ENCODE measurements at regions of chr17 and their contacts with region 1.

Region 1: DNA sequence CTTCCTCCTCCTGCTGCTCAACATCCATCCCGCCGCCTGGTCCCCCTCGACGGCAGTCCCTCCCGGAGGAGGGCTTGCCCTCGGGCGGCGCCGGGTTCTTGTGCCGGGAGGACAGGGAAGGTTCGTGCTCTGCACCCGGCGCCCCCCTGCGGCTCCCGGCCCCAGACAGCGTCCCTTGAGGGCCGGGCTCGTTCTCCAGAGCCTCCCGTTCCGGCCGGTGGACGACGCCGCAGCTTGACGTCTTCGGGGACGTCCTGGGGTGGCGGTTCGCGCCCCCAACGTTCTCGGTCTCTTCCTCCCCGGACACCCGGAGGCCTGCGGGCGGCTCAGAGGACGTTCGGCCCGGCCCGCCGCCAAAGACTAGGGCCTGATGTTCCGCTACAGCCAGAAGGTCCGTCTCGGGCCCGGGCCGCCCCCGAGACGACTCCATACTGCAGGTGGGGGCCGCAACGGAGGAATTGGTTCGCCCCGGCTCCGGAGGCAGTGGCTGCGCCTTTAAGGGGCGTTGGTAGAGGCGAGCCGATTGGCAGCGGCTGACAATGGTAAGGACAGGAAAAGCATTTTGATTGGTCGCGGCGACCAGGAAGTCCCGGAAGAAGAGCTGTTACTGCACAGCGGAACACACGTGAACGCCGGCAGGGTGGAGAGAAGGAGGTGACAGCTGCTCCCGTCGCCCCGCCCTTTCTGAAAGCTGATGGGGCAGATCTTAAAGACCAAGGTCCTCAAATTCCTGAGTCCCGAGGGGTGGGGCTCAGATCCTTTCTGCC is at the start of gene BORCS6:
- DNase-seq: peak; percentile 76 to 97 (median 94)
- ATAC-seq: peak; percentile 81
- H3K4me3 ChIP-seq: peak within 1 kb of the TSS; percentile 91
- H3K4me3 Mint-ChIP-seq: peak within 1 kb of the TSS in 2 of 10 donors; percentile 15 to 49
- H3K27ac ChIP-seq: peak within 1 kb of the TSS; percentile 87
- H3K27ac Mint-ChIP-seq: peak within 1 kb of the TSS in 7 of 9 donors; percentile 46 to 94 (median 88)
- H3K4me1 ChIP-seq: peaks cover 33 to 38% of the 10 kb centered on the region in 2 donors
- H3K4me1 Mint-ChIP-seq: peaks cover 8 to 13% (median 13%) of the 10 kb centered on the region in 7 donors
- H3K27me3 ChIP-seq: no peaks in the 10 kb centered on the region
- H3K27me3 Mint-ChIP-seq: no peaks in the 10 kb centered on the region
- total RNA-seq, gene BORCS6: 5.4 to 16.1 (median 13.4) TPM

Region 2: DNA sequence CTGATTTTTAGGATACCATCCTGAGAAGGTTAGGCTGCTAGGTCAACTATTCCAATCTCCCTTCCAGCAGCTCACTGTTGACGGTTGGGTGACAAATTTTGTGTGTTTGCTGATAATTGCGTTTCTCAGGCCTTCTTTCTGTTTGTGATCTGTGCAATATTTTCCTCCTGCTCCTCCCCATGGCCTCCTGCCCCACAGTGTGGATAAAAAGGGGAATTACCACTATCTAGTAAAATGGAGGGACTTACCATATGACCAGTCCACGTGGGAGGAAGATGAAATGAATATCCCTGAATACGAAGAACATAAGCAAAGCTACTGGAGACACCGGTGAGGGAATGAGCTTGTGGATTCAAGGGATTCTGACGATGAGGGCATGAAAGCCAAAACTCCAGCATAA is 292.1 kb before region 1 on chr17:
- CTCF ChIA-PET with region 1: no interaction called
- POLR2A ChIA-PET with region 1: no interaction called
- intact Hi-C with region 1: no loop called
- DNase-seq: peak in 4 of 9 donors; percentile 33 to 42 (median 36)
- ATAC-seq: peak; percentile 75
- H3K4me3 ChIP-seq: no peak overlapping the region
- H3K4me3 Mint-ChIP-seq: no peak overlapping the region
- H3K27ac ChIP-seq: no peak overlapping the region
- H3K27ac Mint-ChIP-seq: peak overlapping the region in 8 of 9 donors; percentile 0 to 92 (median 78)
- H3K4me1 ChIP-seq: no peaks in the 10 kb centered on the region
- H3K4me1 Mint-ChIP-seq: peaks cover 8 to 27% (median 15%) of the 10 kb centered on the region in 7 donors
- H3K27me3 ChIP-seq: no peaks in the 10 kb centered on the region
- H3K27me3 Mint-ChIP-seq: no peaks in the 10 kb centered on the region

Region 3: DNA sequence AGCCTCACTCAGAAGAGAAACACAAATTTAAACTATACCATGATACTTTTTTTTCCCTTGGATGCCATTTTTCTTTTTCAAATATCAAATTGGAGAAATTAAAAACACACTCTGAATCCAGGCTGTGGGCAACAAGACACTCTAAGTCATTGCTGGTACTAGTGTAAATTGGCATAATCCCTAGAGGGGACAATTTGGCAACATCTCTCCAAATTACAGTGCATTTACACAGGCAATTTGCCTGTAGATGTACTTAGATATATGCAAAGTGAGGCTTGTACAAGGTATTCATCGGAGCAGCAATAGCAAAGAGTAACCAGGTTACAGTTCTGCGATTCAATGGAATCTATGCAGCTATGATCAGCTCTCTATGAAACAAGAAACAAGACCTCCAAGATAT is 194.2 kb before region 1 on chr17:
- CTCF ChIA-PET with region 1: no interaction called
- POLR2A ChIA-PET with region 1: no interaction called
- intact Hi-C with region 1: no loop called
- DNase-seq: no peak
- ATAC-seq: no peak
- H3K4me3 ChIP-seq: no peak overlapping the region
- H3K4me3 Mint-ChIP-seq: no peak overlapping the region
- H3K27ac ChIP-seq: no peak overlapping the region
- H3K27ac Mint-ChIP-seq: no peak overlapping the region
- H3K4me1 ChIP-seq: peaks cover 3 to 4% of the 10 kb centered on the region in 2 donors
- H3K4me1 Mint-ChIP-seq: peaks cover 4 to 13% (median 5%) of the 10 kb centered on the region in 7 donors
- H3K27me3 ChIP-seq: no peaks in the 10 kb centered on the region
- H3K27me3 Mint-ChIP-seq: peaks cover under 1 to 44% (median 8%) of the 10 kb centered on the region in 5 donors

Region 4: DNA sequence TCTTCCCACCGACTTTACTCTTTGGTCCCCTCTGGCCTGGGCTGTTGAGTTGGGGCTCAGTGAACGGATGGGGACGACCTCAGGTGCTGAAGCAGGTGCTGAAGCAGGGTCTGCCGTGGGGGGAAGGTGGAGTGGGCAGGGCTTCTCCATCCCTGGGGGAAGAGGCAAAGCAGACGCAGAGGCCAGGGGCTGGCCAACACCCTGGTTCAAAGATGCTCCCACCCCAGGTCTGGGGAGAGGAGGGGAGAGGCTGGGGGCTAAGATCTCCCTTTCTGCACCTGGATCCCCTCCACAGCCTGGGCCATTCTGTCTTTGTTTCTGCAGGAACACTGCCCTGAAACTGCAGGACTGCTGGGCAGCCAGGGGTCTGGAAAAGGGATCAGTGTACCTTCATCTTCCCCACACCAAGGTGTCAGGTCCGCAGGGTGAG is 125.3 kb before region 1 on chr17:
- CTCF ChIA-PET with region 1: no interaction called
- POLR2A ChIA-PET with region 1: no interaction called
- intact Hi-C with region 1: no loop called
- DNase-seq: no peak
- ATAC-seq: no peak
- H3K4me3 ChIP-seq: no peak overlapping the region
- H3K4me3 Mint-ChIP-seq: no peak overlapping the region
- H3K27ac ChIP-seq: no peak overlapping the region
- H3K27ac Mint-ChIP-seq: no peak overlapping the region
- H3K4me1 ChIP-seq: no peaks in the 10 kb centered on the region
- H3K4me1 Mint-ChIP-seq: peaks cover 0 to 4% (median 0%) of the 10 kb centered on the region in 7 donors
- H3K27me3 ChIP-seq: peaks cover 3 to 10% of the 10 kb centered on the region in 2 donors
- H3K27me3 Mint-ChIP-seq: peaks cover 23 to 74% (median 37%) of the 10 kb centered on the region in 5 donors

Region 5: DNA sequence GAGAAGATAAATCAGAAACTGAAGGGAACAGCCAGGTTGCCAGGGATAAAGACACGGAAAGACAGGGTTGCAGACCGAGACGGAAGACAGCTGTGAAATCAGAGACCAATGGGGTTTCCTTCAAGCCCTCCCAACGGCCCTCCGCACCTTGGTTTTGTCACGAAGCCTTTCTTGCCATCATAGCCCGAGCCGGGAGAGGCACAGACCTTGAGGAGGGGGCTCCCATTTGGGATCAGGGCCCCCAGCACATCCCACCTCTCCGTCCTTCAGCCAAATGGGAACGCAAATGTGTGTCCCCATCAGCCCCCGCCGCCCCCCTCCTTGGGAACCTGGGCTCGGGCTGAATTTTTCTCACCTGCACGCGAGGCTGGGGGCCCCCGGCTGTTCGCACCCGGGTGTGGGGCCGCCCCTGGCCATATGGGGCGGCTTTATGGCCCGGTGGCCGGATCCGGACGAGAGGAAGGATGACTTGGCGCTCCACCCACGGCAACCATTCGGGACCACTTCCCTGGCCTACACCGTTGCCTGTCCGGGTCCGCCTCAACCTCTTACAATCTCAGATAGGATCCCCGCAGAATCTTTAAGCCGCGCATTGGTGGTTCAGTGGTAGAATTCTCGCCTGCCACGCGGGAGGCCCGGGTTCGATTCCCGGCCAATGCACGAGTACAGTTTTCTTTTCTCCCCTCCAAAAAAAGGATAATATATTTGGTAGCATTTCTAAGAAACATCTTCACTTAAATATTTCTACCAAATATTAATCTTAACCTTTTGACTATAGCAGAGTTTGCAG is 64.5 kb before region 1 on chr17:
- CTCF ChIA-PET with region 1: interaction called, 29 read pairs
- POLR2A ChIA-PET with region 1: interaction called, 55 read pairs
- intact Hi-C with region 1: loop called (anchors 1 kb)
- DNase-seq: peak; percentile 82 to 97 (median 87)
- ATAC-seq: peak; percentile 63
- H3K4me3 ChIP-seq: peak overlapping the region; percentile 96
- H3K4me3 Mint-ChIP-seq: peak overlapping the region; percentile 88 to 99 (median 92)
- H3K27ac ChIP-seq: peak overlapping the region; percentile 50
- H3K27ac Mint-ChIP-seq: peak overlapping the region; percentile 80 to 99 (median 94)
- H3K4me1 ChIP-seq: peaks cover 46 to 50% of the 10 kb centered on the region in 2 donors
- H3K4me1 Mint-ChIP-seq: peaks cover 42 to 57% (median 51%) of the 10 kb centered on the region in 7 donors
- H3K27me3 ChIP-seq: peaks cover 0 to 3% of the 10 kb centered on the region in 2 donors
- H3K27me3 Mint-ChIP-seq: peaks cover 0 to 65% (median 27%) of the 10 kb centered on the region in 5 donors

Region 6: DNA sequence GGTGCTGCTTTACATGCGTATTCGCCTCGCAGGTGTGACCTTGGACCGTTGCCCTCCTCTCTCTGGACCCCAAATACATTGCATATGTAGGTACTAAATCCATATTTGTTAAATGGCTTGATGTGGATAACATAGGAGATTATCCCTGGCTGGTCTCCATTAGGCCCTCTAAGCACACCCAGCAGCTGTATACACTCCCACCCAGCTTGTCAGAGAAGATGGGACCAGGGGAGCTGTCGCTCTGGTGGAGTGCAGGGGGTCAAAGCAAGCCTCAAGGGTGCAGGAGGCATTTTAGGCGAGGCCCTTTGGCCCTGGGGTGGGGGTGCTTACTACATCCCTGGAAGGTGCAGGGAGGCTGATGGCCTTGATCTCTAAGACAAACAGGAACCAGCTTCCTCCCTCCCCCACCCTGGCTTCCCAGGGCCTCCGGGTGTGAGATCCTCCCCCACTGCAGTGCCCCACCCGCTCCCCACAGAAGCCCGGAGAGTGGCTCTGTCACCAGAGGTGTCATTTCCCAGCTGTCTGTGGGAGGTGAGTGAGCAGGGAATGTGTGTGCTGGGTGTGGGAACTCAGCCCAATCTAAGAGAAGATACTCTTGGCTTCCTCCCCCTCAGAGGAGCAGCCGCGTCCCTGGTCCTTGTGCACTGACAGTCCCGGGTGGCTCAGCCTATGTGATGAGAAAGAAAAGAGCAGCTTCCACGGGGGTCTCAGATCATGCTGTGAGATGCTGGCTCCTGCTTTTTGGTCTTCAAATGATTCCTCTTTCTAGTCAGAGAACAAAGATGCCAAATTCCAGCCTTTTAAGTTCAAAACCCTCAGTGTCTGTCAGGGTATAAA is 25.7 kb before region 1 on chr17:
- CTCF ChIA-PET with region 1: interaction called, 3 read pairs
- POLR2A ChIA-PET with region 1: interaction called, 820 read pairs
- intact Hi-C with region 1: loop called in 1 of 2 experiments (anchors 1 kb)
- DNase-seq: peak; percentile 38 to 80 (median 71)
- ATAC-seq: peak; percentile 68
- H3K4me3 ChIP-seq: peak overlapping the region; percentile 72
- H3K4me3 Mint-ChIP-seq: peak overlapping the region; percentile 78 to 94 (median 85)
- H3K27ac ChIP-seq: peak overlapping the region; percentile 100
- H3K27ac Mint-ChIP-seq: peak overlapping the region in 8 of 9 donors; percentile 94 to 99 (median 98)
- H3K4me1 ChIP-seq: peaks cover 35 to 46% of the 10 kb centered on the region in 2 donors
- H3K4me1 Mint-ChIP-seq: peaks cover 45 to 63% (median 55%) of the 10 kb centered on the region in 7 donors
- H3K27me3 ChIP-seq: peaks cover 0 to 3% of the 10 kb centered on the region in 2 donors
- H3K27me3 Mint-ChIP-seq: no peaks in the 10 kb centered on the region

Region 7: GRCh38 chr17:8204761-8205555 is 15.1 kb after region 1 on chr17:
- CTCF ChIA-PET with region 1: interaction called, 6 read pairs
- POLR2A ChIA-PET with region 1: interaction called, 91 read pairs
- intact Hi-C with region 1: loop called (anchors 1 kb)
- DNase-seq: no peak
- ATAC-seq: no peak
- H3K4me3 ChIP-seq: no peak overlapping the region
- H3K4me3 Mint-ChIP-seq: no peak overlapping the region
- H3K27ac ChIP-seq: no peak overlapping the region
- H3K27ac Mint-ChIP-seq: peak overlapping the region in 1 of 9 donors; percentile 38
- H3K4me1 ChIP-seq: peaks cover 0 to 2% of the 10 kb centered on the region in 2 donors
- H3K4me1 Mint-ChIP-seq: peaks cover 5 to 37% (median 7%) of the 10 kb centered on the region in 7 donors
- H3K27me3 ChIP-seq: no peaks in the 10 kb centered on the region
- H3K27me3 Mint-ChIP-seq: peaks cover 0 to 2% (median 0%) of the 10 kb centered on the region in 5 donors

Region 8: GRCh38 chr17:8288336-8289102 is 98.6 kb after region 1 on chr17 and contains the start of gene RANGRF:
- CTCF ChIA-PET with region 1: no interaction called
- POLR2A ChIA-PET with region 1: interaction called, 4 read pairs
- intact Hi-C with region 1: loop called (anchors 1 kb)
- DNase-seq: peak; percentile 64 to 86 (median 74)
- ATAC-seq: peak; percentile 95
- H3K4me3 ChIP-seq: peak within 1 kb of the TSS; percentile 95
- H3K4me3 Mint-ChIP-seq: peak within 1 kb of the TSS; percentile 92 to 100 (median 97)
- H3K27ac ChIP-seq: peak within 1 kb of the TSS; percentile 96
- H3K27ac Mint-ChIP-seq: peak within 1 kb of the TSS; percentile 89 to 98 (median 96)
- H3K4me1 ChIP-seq: peaks cover 8 to 24% of the 10 kb centered on the region in 2 donors
- H3K4me1 Mint-ChIP-seq: peaks cover 27 to 46% (median 43%) of the 10 kb centered on the region in 7 donors
- H3K27me3 ChIP-seq: no peaks in the 10 kb centered on the region
- H3K27me3 Mint-ChIP-seq: no peaks in the 10 kb centered on the region
- total RNA-seq, gene RANGRF: 26.0 to 46.1 (median 38.9) TPM

Region 9: DNA sequence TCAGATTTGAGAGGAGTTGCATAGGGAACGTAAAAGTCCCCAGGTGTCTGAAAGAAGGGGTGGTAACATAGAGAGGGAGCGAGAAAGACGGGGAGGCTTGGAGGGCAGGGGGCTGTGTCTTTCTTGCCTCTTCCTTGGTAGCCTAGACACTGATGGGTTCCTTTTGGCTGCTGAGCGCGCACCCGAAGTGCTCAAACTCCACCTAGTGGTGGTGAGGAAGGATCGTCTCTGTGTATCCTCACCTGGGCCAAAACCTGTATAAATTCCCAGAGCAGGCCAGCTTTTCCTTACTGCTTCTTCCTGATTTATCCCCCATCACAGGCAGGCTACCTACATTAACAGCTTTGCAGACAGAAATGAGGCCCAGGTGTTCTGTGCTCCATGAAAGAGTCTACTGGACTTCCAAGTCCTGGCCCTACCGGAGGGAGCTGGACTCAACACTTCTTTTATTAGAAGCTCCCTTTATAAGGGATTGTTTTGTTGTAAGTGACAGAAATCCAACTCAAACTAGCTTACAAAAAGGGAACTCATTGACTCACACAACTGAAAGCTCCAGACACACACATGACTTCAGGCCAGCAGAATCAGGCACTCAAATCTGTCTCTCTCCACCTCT is 110.8 kb after region 1 on chr17:
- CTCF ChIA-PET with region 1: interaction called, 8 read pairs
- POLR2A ChIA-PET with region 1: interaction called, 19 read pairs
- intact Hi-C with region 1: loop called (anchors 1 kb)
- DNase-seq: peak; percentile 33 to 80 (median 72)
- ATAC-seq: peak; percentile 95
- H3K4me3 ChIP-seq: no peak overlapping the region
- H3K4me3 Mint-ChIP-seq: peak overlapping the region in 1 of 10 donors; percentile 14
- H3K27ac ChIP-seq: no peak overlapping the region
- H3K27ac Mint-ChIP-seq: peak overlapping the region in 7 of 9 donors; percentile 6 to 80 (median 71)
- H3K4me1 ChIP-seq: peaks cover 3 to 9% of the 10 kb centered on the region in 2 donors
- H3K4me1 Mint-ChIP-seq: peaks cover 7 to 18% (median 14%) of the 10 kb centered on the region in 7 donors
- H3K27me3 ChIP-seq: no peaks in the 10 kb centered on the region
- H3K27me3 Mint-ChIP-seq: peaks cover 0 to 5% (median 0%) of the 10 kb centered on the region in 5 donors

Measured in naive thymus-derived CD4-positive, alpha-beta T cell (primary cell).